Left lung (tissue), 14 donors: ENCODE measurements at regions of chr5 and their contacts with region 1.

Region 1: DNA sequence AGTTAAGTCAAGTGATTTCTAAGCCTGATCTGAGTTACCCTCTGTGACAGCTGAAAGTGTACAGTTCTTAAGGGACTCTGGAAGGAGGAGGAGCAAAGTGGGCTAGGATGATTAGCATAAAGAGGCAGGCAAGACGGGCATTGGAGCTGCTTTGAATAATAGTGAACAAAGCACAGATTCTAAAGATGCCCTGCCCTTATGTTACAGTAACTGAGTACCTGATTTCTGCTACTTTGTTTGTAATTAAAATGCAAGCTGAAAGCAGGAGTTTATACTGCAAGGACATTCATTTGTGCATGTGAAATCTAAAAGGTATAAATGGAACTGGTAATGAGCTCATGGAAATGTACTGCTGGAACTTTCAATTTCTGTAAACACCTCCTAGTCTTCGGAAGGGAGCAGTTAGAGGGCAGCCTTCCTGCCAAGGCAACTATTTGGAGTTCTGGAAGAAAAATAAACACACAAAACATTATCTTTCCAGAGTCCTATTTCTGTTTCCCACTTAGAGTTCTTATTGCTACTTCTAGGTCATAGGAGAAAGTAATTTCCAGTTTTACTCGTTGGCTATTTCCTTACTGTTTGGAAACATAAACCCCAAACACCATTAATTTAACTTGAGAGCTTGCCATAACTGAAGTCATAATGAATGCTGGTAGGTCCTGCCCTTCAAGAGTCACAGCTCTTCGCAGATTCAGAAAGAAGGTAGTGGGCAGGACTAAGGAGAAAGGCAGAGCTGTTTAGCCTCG is at the start of gene RANBP3L:
- DNase-seq: peak in 2 of 4 donors; percentile 55 to 71
- ATAC-seq: peak; percentile 93
- H3K4me3 ChIP-seq: peak within 1 kb of the TSS in 1 of 2 donors; percentile 25
- H3K27ac ChIP-seq: peak within 1 kb of the TSS; percentile 74 to 77
- H3K4me1 ChIP-seq: peaks cover 0 to 8% of the 10 kb centered on the region in 2 donors
- H3K27me3 ChIP-seq: no peaks in the 10 kb centered on the region
- CTCF ChIP-seq: no peak
- polyA plus RNA-seq, gene RANBP3L: 1.1 to 3.2 (median 1.8) TPM

Region 2: DNA sequence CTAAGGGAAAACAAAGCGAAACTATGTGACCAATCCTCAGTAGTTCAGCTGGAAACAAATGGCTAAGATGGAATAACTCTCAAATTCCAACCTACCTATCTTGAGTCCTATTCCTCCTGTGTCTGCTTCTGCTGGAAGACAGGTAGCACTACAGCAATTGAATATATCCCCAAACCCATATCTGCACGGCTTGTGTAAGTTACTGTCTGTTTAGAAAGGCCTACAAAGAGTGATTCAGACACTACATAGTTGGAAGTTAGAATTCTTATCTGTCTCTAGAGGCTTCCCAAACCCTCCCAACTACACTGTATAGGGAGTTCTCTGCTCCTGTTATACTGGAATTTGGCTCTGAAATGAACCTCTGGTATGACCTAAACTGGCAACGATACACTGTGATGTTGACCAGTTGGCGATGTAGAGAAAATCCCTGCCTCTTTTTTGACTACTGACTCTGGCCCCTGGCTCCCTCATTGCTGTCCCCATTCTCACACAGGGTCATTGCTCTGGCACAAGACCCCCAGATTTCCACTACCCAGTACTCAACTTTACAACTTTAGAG is 37.8 kb before region 1 on chr5:
- intact Hi-C with region 1: loop called in 1 of 2 experiments (anchors 5 kb)
- DNase-seq: no peak
- ATAC-seq: no peak
- H3K4me3 ChIP-seq: no peak overlapping the region
- H3K27ac ChIP-seq: no peak overlapping the region
- H3K4me1 ChIP-seq: no peaks in the 10 kb centered on the region
- H3K27me3 ChIP-seq: no peaks in the 10 kb centered on the region
- CTCF ChIP-seq: no peak